ENCODE measurements at regions of chr1 and their contacts with region 1.

Region 1: GRCh38 chr1:164611754-164612642 is 53.0 kb downstream of the PBX1 start:
- DNase-seq: no peak
- ATAC-seq: peak; percentile 75
- H3K4me3 ChIP-seq: no peak overlapping the region
- H3K27ac ChIP-seq: peak overlapping the region in 1 of 2 donors; percentile 74
- H3K4me1 ChIP-seq: peaks cover 4 to 10% of the 10 kb centered on the region in 2 donors
- H3K27me3 ChIP-seq: no peaks in the 10 kb centered on the region

Region 2: GRCh38 chr1:164558461-164559341 is 53.3 kb before region 1 on chr1 and contains the start of gene PBX1:
- intact Hi-C with region 1: loop called in 1 of 2 experiments (anchors 5 kb)
- DNase-seq: peak; percentile 97 to 98
- ATAC-seq: peak; percentile 98
- H3K4me3 ChIP-seq: peak within 1 kb of the TSS; percentile 95 to 96
- H3K27ac ChIP-seq: peak within 1 kb of the TSS; percentile 51 to 76
- H3K4me1 ChIP-seq: peaks cover 0 to 2% of the 10 kb centered on the region in 2 donors
- H3K27me3 ChIP-seq: no peaks in the 10 kb centered on the region
- total RNA-seq, gene PBX1: 61.8 to 125 TPM

Region 3: DNA sequence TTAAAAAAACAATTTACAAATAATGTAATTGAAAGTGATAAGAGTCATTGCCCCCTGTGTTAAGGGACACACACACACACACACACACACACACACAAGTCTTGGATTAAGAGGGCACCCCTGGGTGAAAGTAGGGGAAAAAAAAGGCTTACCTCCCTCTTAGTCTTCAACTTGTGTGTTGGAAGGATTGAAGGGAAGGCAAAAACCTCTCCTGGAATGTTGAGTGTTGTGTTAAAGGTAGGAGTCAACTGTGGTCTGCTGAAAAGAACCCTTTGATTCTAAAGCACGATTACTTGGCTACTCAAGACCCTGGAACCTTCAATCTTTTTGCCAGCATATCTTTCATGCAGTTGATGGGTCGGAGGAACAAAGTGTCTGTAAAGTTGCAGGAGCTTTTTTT is 46.6 kb before region 1 on chr1:
- intact Hi-C with region 1: loop called in 1 of 2 experiments (anchors 5 kb)
- DNase-seq: no peak
- ATAC-seq: no peak
- H3K4me3 ChIP-seq: peak overlapping the region in 1 of 2 donors; percentile 48
- H3K27ac ChIP-seq: peak overlapping the region; percentile 54 to 57
- H3K4me1 ChIP-seq: peaks cover 0 to 2% of the 10 kb centered on the region in 2 donors
- H3K27me3 ChIP-seq: no peaks in the 10 kb centered on the region

Region 4: DNA sequence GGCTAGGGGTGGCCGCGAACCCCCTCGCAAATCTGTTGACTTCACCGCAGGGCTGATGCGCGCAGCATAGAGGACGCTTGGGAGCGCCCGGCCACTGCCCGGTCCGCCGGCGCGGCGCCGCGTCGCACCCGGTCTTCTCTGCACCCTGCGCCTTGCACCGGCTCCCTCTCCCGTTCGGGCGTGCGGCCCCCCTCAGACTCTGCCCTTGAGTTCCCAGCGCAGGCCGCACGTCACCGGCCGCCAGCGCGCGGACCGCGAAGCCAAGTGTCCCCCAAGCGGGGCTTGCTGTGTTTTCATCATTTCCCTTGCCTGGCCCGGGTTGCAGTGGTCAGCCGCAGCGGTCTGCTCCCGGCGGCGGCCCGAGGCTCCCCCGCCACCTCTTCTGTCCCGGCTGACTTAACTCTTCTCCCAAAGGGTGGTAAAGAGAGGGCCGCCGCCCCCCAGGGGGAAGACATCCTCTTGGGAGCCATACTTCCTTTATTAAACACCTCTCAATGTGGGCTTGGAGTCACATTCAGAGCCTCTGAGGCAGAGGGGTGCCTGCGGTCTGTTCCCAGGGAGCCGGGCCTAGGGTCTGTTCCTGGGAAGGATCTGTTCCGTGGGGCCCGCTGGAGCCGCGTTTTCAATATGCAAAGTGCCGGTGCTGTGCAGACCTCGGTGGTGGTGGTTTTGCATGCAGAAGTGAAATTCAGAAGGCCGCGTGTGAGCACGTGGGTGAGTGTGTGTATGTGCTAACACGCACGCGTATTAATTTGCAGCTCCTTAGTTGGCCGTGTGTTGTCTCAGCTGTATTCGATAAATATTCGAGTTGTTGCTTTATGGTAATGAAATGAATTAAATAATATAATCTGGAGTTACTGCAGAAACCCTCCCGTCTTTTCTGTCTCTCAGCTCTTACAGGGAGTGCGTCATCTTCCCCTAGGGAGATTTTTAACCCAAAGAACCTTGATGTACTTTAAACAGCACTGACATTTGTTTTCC is 35.4 kb before region 1 on chr1:
- intact Hi-C with region 1: loop called in 1 of 2 experiments (anchors 5 kb)
- DNase-seq: peak; percentile 61 to 80
- ATAC-seq: peak; percentile 89
- H3K4me3 ChIP-seq: peak overlapping the region; percentile 1 to 24
- H3K27ac ChIP-seq: peak overlapping the region in 1 of 2 donors; percentile 58
- H3K4me1 ChIP-seq: peaks cover 2 to 5% of the 10 kb centered on the region in 2 donors
- H3K27me3 ChIP-seq: no peaks in the 10 kb centered on the region

Region 5: DNA sequence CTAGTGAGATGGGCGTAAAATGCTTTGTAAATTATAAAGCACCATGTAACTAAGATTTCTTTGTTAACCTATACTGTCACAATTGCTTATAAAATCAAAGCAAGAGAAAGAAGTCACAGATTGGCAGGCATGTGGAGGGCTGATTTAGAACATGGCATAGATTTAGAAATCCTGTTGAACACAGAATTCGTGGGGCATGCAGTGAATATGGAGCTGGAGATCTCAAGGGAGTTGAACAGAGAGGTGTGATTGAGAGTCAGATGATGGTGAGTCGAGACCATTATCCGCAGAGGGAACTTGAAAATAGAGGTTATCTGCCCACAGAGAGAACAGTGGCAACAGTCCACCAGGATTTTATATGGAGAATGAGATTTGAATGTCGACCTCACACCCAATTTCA is 25.4 kb before region 1 on chr1:
- intact Hi-C with region 1: no loop called
- DNase-seq: no peak
- ATAC-seq: no peak
- H3K4me3 ChIP-seq: no peak overlapping the region
- H3K27ac ChIP-seq: no peak overlapping the region
- H3K4me1 ChIP-seq: peaks cover under 1 to 7% of the 10 kb centered on the region in 2 donors
- H3K27me3 ChIP-seq: no peaks in the 10 kb centered on the region

Measured in aorta (tissue), 5 donors.